T-cell (primary cell): ENCODE measurements at regions of chr12 and their contacts with region 1.

Region 1: DNA sequence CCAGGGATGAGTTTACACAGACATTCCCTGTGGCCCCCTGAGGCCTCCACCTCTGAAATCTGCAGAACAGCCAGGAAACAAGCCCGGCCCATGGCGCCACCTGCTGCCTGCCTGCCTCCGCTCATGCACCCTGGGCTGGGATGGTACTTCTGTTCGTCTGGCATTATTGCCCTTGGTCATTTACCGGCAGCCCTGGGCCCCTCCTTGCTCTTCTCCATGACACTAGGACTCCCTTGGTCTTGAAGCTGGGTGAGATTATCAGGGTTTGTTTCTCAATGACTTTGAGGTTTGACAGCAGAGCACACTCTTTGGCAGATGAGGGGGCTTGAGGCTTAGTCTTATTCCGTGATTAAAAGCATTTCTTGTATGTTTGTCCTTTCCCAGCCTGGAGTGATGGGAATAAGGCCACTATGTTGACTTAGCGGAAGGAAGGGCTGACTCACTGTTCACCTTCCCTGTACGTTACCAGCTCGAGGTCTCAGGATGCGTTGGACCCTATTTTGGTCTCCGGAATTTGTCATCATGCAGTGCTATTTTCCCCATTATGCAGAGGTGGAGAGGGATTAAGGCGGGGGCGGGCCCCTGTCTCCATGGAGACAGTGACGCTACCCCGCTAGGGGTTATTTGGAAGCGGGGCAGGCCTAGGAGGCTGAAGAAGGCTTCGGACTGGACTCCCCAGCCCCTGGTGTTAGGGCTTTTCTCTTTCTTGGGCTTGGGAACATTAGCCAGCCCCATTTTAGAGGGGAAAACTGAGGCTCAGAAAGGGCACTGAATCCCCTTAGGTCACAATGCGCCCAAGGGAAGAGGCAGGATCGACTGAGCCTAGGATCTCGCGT is 706 bp upstream of the PEX5 start:
- DNase-seq: peak; percentile 15 to 75 (median 57)
- ATAC-seq: peak; percentile 28 to 39 (median 32)
- H3K4me3 ChIP-seq: peak overlapping the region; percentile 60 to 81
- H3K4me3 Mint-ChIP-seq: peak overlapping the region; percentile 91 to 96 (median 96)
- H3K27ac ChIP-seq: peak overlapping the region; percentile 74
- H3K27ac Mint-ChIP-seq: peak overlapping the region; percentile 96 to 97
- H3K4me1 ChIP-seq: peaks cover 7 to 28% of the 10 kb centered on the region in 2 experiments
- H3K4me1 Mint-ChIP-seq: peaks cover 39 to 48% (median 41%) of the 10 kb centered on the region in 3 donors
- H3K27me3 ChIP-seq: no peaks in the 10 kb centered on the region
- H3K27me3 Mint-ChIP-seq: no peaks in the 10 kb centered on the region

Region 2: DNA sequence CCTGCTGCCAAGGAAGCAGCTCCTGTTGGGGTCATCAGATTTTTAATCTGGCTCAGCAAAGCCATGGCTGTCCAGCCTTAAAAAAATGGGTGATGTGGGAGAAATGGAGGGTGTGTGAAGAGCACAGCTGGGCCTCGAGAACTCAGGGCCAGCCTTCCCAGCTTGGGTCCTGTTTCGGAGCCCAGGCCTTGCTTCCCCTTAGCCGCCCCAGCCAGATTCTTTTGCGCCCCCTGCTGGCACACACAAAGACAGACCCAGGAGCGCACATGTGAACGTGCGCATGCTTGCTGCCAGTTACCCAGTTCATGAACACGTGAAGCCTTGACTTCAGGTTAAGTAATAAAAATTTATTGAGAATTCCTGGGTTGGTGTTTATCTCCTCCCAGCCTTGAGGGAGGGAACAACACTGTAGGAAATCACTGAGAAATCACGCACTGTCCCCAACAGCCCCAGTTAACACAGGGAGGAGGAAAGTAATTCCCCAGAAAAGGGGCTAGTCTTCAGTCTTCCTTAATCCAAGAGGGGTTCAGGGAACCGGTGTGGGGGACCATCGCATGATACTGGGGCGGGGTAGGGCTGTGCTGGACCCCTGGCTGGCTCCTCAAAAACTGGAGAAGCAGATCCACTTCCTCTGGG is 223.6 kb before region 1 on chr12:
- CTCF ChIA-PET with region 1: interaction called in 1 of 2 experiments, 11 read pairs
- POLR2A ChIA-PET with region 1: no interaction called
- DNase-seq: peak; percentile 73 to 95 (median 84)
- ATAC-seq: peak; percentile 43 to 52 (median 49)
- H3K4me3 ChIP-seq: no peak overlapping the region
- H3K4me3 Mint-ChIP-seq: no peak overlapping the region
- H3K27ac ChIP-seq: peak overlapping the region; percentile 69
- H3K27ac Mint-ChIP-seq: peak overlapping the region; percentile 83 to 87
- H3K4me1 ChIP-seq: peaks cover 30 to 72% of the 10 kb centered on the region in 2 experiments
- H3K4me1 Mint-ChIP-seq: peaks cover 44 to 62% (median 55%) of the 10 kb centered on the region in 3 donors
- H3K27me3 ChIP-seq: no peaks in the 10 kb centered on the region
- H3K27me3 Mint-ChIP-seq: no peaks in the 10 kb centered on the region

Region 3: DNA sequence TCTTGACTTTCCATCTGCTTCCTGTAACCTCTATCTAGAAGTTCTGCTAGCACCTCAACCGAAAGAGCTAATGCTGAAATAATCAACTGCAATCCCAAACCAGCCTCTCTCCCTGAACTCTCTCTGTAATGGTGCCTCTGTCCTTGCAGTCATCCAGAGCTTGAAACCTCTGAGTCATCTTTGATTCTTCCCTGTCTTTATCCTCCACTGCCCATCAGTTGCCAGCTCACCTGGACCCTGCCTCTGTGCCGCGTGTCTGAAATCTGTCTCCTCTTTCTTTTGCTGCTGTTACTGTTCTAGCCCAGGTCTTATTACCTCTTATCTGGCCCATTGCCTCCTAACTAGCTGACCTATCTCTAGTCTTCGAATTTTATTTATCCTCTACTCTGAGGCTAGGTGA is 43.1 kb before region 1 on chr12:
- CTCF ChIA-PET with region 1: interaction called in 1 of 2 experiments, 12 read pairs
- POLR2A ChIA-PET with region 1: no interaction called
- DNase-seq: no peak
- ATAC-seq: no peak
- H3K4me3 ChIP-seq: no peak overlapping the region
- H3K4me3 Mint-ChIP-seq: no peak overlapping the region
- H3K27ac ChIP-seq: no peak overlapping the region
- H3K27ac Mint-ChIP-seq: no peak overlapping the region
- H3K4me1 ChIP-seq: no peaks in the 10 kb centered on the region
- H3K4me1 Mint-ChIP-seq: peaks cover 0 to 10% (median 2%) of the 10 kb centered on the region in 3 donors
- H3K27me3 ChIP-seq: no peaks in the 10 kb centered on the region
- H3K27me3 Mint-ChIP-seq: no peaks in the 10 kb centered on the region

Region 4: GRCh38 chr12:7948589-7949260 is 759.9 kb after region 1 on chr12:
- CTCF ChIA-PET with region 1: no interaction called
- POLR2A ChIA-PET with region 1: interaction called in 1 of 2 experiments, 10 read pairs
- DNase-seq: no peak
- ATAC-seq: no peak
- H3K4me3 ChIP-seq: no peak overlapping the region
- H3K4me3 Mint-ChIP-seq: no peak overlapping the region
- H3K27ac ChIP-seq: no peak overlapping the region
- H3K27ac Mint-ChIP-seq: no peak overlapping the region
- H3K4me1 ChIP-seq: peaks cover 0 to 5% of the 10 kb centered on the region in 2 experiments
- H3K4me1 Mint-ChIP-seq: peaks cover 0 to 6% (median 4%) of the 10 kb centered on the region in 3 donors
- H3K27me3 ChIP-seq: no peaks in the 10 kb centered on the region
- H3K27me3 Mint-ChIP-seq: no peaks in the 10 kb centered on the region